Mammary epithelial cell (primary cell): ENCODE measurements at regions of chr1 and their contacts with region 1.

Region 1: GRCh38 chr1:47580451-47580995 is 142.7 kb downstream of the FOXD2 start:
- DNase-seq: no peak
- H3K4me3 ChIP-seq: no peak overlapping the region
- H3K27ac ChIP-seq: no peak overlapping the region
- H3K4me1 ChIP-seq: peaks cover 47% of the 10 kb centered on the region
- H3K27me3 ChIP-seq: no peaks in the 10 kb centered on the region
- CTCF ChIP-seq: no peak

Region 2: GRCh38 chr1:47534436-47534835 is 46.1 kb before region 1 on chr1:
- CTCF ChIA-PET with region 1: no interaction called
- dilution Hi-C with region 1: no loop called
- in situ Hi-C with region 1: no loop called
- intact Hi-C with region 1: no loop called
- DNase-seq: peak; percentile 14
- H3K4me3 ChIP-seq: no peak overlapping the region
- H3K27ac ChIP-seq: no peak overlapping the region
- H3K4me1 ChIP-seq: peaks cover 8% of the 10 kb centered on the region
- H3K27me3 ChIP-seq: no peaks in the 10 kb centered on the region
- CTCF ChIP-seq: no peak

Region 3: DNA sequence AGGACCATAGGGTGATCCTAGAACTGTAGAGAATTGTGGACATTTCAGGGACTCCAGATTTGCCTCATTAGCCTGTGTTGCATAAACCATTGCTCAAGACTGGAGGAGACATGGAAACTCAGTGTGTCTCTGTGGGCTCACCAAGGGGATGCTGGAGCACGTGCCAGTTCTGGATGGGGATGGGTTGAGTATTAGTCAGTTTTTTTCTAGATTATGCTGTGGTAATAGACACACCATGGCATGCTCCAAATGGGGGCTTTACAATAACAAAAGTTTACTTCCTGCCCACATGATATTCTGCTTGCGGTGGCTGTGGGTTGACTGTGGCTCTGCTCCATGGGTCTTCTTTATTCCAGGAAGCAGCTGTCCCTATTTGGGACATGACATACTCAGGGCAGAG is 17.3 kb before region 1 on chr1:
- CTCF ChIA-PET with region 1: no interaction called
- dilution Hi-C with region 1: no loop called
- in situ Hi-C with region 1: no loop called
- intact Hi-C with region 1: no loop called
- DNase-seq: no peak
- H3K4me3 ChIP-seq: no peak overlapping the region
- H3K27ac ChIP-seq: no peak overlapping the region
- H3K4me1 ChIP-seq: peaks cover 25% of the 10 kb centered on the region
- H3K27me3 ChIP-seq: no peaks in the 10 kb centered on the region
- CTCF ChIP-seq: no peak

Region 4: DNA sequence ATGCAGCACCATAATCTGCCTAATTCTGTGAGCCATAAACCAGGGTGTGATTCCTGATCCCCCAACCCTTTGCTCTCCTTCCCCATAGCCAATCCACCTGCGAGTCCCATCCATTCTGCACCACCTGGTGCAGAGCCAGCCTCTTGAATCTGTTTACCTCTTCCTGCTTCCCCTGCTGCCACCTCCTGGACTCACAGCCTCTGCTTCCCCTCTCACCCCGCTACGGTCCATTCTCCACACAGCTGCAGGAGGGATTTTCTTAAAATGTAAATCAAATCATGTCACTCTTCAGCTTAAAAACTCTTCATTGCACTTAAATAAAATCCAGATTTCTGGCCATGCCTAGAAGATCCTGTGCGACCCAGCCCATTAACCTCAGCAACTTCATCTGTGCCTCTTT is 44.0 kb after region 1 on chr1:
- CTCF ChIA-PET with region 1: no interaction called
- dilution Hi-C with region 1: no loop called
- in situ Hi-C with region 1: no loop called
- intact Hi-C with region 1: no loop called
- DNase-seq: peak; percentile 10
- H3K4me3 ChIP-seq: no peak overlapping the region
- H3K27ac ChIP-seq: no peak overlapping the region
- H3K4me1 ChIP-seq: no peaks in the 10 kb centered on the region
- H3K27me3 ChIP-seq: no peaks in the 10 kb centered on the region
- CTCF ChIP-seq: peak; percentile 39 to 72

Region 5: DNA sequence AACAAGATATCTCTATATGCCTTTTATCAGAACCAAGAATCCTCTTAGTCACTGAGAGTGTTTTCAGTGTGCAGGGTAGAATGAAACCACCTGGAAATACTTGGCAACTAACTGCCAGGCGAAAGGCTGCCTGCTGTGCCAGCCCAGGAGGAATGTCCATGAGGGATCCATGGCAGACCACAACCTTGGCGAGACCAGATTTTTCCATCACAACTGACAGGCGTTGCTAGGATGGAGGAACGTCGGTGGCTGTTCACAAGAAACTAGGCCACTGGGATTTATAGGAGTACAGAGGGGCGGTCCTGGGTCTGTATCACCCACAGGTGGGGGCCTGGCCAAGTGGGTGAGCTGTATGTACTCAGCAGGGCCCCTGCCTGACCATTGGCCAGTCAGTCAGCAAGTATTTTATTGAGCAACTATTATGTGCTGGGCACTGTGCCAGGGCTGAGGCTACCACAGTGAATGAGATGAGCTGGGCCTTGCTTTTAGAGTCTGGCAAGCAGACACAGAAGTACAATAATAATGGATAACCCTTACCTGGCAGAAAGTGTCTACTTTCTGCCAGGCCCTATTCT is 56.7 kb after region 1 on chr1:
- CTCF ChIA-PET with region 1: no interaction called
- dilution Hi-C with region 1: no loop called
- in situ Hi-C with region 1: no loop called
- intact Hi-C with region 1: no loop called
- DNase-seq: peak; percentile 53
- H3K4me3 ChIP-seq: no peak overlapping the region
- H3K27ac ChIP-seq: no peak overlapping the region
- H3K4me1 ChIP-seq: no peaks in the 10 kb centered on the region
- H3K27me3 ChIP-seq: no peaks in the 10 kb centered on the region
- CTCF ChIP-seq: no peak

Region 6: DNA sequence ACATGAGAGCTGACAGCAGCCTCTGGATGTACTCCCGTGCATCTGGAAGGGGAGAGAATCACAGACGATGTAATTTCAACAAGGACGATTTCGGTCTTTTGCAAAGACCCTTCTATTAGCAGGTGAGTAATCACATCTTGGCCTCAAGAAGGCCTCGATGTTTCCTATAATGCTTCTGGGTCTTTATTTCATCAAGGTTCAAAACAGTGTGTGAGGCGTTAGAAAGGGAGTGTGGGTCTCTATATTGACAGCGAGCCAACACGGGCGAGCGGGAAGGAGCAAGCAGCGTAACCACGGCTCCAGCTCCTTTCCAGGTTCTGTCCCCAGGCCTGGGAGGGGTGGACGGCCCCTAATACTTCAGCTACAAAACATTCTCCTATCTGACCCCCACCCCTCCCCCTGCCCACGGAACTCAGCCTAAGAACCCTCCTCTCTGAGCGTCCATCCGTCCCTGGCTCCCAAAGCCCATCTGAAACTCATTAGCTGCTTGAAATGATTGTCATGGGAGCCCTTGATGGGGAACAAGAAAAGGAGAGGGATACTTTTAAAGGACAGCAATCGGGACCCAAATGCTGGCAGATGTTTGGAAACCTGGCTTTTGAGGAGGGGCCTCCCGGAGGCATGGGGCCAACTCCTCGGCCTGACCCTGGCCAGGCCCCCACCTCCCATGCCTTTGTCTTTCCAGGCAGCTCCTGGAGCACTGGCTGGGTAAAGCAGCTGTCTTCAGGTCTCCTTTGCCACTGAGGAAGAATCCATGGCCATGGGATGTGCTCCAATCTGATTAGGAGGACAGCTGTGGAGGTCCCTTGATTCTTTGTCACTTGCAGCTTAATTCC is 108.2 kb after region 1 on chr1:
- CTCF ChIA-PET with region 1: interaction called, 11 read pairs
- dilution Hi-C with region 1: no loop called
- in situ Hi-C with region 1: no loop called
- intact Hi-C with region 1: no loop called
- DNase-seq: no peak
- H3K4me3 ChIP-seq: no peak overlapping the region
- H3K27ac ChIP-seq: no peak overlapping the region
- H3K4me1 ChIP-seq: no peaks in the 10 kb centered on the region
- H3K27me3 ChIP-seq: no peaks in the 10 kb centered on the region
- CTCF ChIP-seq: no peak